ENCODE measurements at regions of chr1 and their contacts with region 1.

Region 1: GRCh38 chr1:117067533-117068370 is 7.6 kb downstream of the TTF2 start:
- DNase-seq: peak; percentile 50
- ATAC-seq: peak; percentile 92

Region 2: DNA sequence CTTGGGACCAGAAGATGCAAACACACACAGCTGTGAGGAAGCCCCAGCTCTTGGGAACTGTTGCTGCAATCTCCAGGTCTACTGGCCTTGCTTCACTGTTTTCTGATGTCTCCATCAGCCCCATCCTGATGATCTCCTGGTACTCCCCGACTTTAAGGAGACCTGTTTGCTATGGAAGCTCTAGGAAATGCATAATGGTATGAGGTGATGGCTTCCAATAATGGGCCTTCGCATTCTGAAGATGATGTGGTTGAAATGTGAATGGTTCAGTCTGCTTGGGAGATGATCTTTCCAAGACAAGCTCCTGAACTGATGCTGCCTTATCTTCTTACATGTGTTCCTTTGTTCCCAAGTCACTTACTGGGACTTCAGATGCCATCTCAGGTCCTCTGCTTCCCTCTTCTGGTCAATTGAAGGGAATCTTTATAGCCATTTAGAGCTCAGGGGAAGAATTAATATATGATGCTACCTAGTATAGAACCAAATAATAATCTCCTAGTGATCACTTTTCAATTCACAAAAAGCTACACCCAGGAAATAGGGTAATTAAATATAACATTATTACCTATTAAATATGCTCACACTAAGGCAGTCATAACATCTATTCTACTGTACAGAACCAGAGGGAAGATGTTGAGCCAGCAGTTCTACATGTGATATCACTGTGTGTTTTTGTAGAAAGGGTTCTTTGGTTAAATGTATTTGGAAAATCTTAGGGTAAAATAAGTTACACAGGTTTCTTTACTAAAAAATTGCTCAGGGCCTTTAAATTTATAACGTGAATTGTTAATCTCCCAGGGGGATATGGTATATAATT is 216.9 kb after region 1 on chr1:
- intact Hi-C with region 1: loop called (anchors 2 kb)
- DNase-seq: no peak
- ATAC-seq: peak; percentile 72

Measured in left ventricle myocardium superior (tissue), 1 donor.